ENCODE measurements at regions of chr2 and their contacts with region 1.

Region 1: GRCh38 chr2:33275689-33276444 is 200.6 kb upstream of the RASGRP3 start:
- DNase-seq: peak; percentile 99
- ATAC-seq: peak; percentile 99
- H3K4me3 ChIP-seq: no peak overlapping the region
- H3K27ac ChIP-seq: peak overlapping the region; percentile 99
- H3K4me1 ChIP-seq: peaks cover 37% of the 10 kb centered on the region
- H3K27me3 ChIP-seq: no peaks in the 10 kb centered on the region
- CTCF ChIP-seq: no peak

Region 2: DNA sequence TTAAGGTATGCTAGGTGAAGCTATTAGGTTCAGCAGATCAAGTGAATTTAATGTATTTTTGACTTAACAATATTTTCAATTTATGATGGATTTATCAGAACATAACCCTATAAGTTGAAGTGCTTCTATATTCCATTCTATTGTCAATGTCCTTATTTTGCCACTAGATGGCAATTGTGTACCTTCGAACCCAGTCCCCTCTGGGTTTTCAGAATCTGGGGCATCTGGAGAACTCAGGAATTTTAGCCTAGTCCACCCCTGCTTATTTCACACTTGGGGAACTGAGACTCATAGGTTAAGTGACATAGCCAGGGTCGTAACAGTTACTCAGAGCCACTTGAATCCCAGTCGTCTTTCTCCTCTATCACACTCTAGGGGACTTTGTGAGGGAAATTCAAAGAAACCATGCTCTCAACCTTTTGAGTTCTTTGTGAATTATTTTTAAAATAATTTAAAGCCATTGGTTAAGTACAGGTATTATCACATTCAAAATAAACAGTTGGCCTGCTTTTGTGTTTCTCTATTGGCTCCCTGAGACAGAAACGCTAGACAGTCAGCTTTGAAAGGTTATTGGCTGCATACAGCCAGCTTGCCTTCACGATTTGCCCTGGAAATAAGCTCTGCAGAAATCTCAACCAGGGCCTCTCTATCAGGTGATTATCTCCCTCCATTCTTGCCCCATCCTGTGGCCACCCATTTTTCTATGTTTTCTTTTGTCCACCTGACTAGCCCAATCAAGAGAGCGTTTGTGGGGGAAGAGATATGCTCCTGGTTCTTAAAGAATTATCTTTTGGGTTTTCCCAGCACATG is 503.0 kb before region 1 on chr2:
- CTCF ChIA-PET with region 1: no interaction called
- POLR2A ChIA-PET with region 1: no interaction called
- intact Hi-C with region 1: loop called (anchors 5 kb)
- DNase-seq: peak; percentile 73
- ATAC-seq: peak; percentile 75
- H3K4me3 ChIP-seq: no peak overlapping the region
- H3K27ac ChIP-seq: no peak overlapping the region
- H3K4me1 ChIP-seq: no peaks in the 10 kb centered on the region
- H3K27me3 ChIP-seq: no peaks in the 10 kb centered on the region
- CTCF ChIP-seq: peak; percentile 91

Region 3: DNA sequence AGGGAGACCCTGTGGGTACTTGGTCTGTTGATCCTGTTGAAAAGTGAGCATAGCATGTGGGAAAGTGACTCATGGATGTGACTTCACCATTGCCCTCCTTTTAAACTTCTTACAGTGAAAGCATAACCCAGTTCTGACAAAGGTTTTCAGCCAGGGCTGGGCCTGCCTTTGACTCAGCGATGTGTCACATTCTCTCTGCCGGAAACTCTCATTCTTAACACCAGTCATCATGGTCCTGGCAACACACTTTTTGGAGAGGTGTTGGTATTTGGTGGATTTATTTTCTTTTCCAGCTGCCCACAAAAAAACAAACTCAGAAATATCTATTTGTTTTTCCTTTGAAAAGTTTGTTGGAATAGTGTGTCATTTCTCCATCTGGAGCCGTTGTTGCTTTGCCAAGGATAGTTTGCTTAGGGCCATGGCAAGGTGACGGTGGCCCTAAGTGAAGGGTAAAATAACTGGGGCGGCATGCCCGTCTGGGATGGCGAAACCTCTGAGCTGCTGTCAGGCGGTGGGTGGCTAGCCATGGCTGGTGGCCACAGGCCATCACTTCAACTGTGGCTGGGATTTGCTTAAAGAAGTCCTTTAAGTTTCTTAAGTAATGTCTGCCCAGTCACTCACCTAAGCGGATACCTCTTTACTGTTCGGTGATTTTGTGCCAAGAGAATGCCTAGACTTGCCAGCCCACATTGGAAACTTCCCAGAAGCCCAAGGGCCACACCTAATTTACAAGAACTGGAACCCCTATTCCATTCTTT is 205.8 kb before region 1 on chr2:
- CTCF ChIA-PET with region 1: no interaction called
- POLR2A ChIA-PET with region 1: no interaction called
- intact Hi-C with region 1: loop called (anchors 1 kb)
- DNase-seq: peak; percentile 99
- ATAC-seq: peak; percentile 86
- H3K4me3 ChIP-seq: peak overlapping the region; percentile 19; the same call in 1 of the 2 replicates
- H3K27ac ChIP-seq: peak overlapping the region; percentile 98
- H3K4me1 ChIP-seq: peaks cover 62% of the 10 kb centered on the region
- H3K27me3 ChIP-seq: no peaks in the 10 kb centered on the region
- CTCF ChIP-seq: no peak

Region 4: DNA sequence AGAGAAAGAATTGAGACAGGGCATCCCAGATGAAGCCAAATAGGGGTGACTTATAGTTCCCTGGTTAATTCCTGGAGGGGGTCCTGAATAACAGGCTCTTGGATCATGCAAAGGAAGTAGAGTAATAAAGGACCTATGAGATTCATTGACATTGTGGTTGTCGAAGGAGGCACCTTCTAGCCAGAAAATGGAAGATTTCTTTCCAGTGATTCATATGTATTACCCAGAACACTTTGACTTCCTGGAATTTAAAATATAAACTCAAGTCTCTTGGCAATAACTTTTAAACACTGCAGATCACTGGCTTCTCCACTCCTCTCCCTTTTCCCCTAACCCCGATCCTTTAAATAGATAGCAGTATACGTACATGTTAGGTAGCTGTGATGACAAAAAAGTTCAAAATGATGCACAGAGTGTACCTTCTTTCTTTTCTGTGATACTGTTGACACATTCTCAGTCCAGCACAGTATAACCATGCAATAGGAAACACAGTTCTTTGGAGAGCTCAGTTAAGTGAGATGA is 117.3 kb before region 1 on chr2:
- CTCF ChIA-PET with region 1: no interaction called
- POLR2A ChIA-PET with region 1: no interaction called
- intact Hi-C with region 1: loop called (anchors 5 kb)
- DNase-seq: peak; percentile 90
- ATAC-seq: peak; percentile 87
- H3K4me3 ChIP-seq: peak overlapping the region; percentile 24; the same call in 1 of the 2 replicates
- H3K27ac ChIP-seq: peak overlapping the region; percentile 89
- H3K4me1 ChIP-seq: peaks cover 26% of the 10 kb centered on the region
- H3K27me3 ChIP-seq: no peaks in the 10 kb centered on the region
- CTCF ChIP-seq: no peak

Region 5: DNA sequence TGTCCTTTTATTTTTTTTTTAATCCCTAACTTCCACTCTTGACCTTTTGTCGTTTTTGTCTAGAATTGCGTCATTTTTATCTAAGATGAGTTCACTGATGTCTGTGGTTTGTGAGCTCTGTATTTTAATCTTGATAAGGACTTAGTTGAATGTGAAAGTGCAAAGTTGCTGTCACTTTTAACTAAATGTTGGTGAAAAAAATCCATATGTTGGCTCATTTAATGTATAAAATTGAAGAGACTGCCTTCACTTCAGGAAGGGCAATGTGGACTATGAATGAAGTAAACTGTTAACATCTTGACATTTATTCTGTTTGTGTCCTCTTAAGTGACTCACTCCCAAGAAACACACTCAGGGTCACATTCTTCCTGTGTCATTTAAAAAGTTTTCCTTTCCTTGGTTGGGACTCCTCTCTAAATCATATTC is 56.0 kb before region 1 on chr2:
- CTCF ChIA-PET with region 1: no interaction called
- POLR2A ChIA-PET with region 1: no interaction called
- intact Hi-C with region 1: no loop called
- DNase-seq: peak; percentile 46
- ATAC-seq: peak; percentile 75
- H3K4me3 ChIP-seq: no peak overlapping the region
- H3K27ac ChIP-seq: peak overlapping the region; percentile 19
- H3K4me1 ChIP-seq: peaks cover 13% of the 10 kb centered on the region
- H3K27me3 ChIP-seq: no peaks in the 10 kb centered on the region
- CTCF ChIP-seq: no peak

Region 6: GRCh38 chr2:33372940-33373553 is 97.2 kb after region 1 on chr2:
- CTCF ChIA-PET with region 1: no interaction called
- POLR2A ChIA-PET with region 1: no interaction called
- intact Hi-C with region 1: loop called (anchors 2 kb)
- DNase-seq: peak; percentile 86
- ATAC-seq: peak; percentile 45; the same call in 1 of the 2 replicates
- H3K4me3 ChIP-seq: no peak overlapping the region
- H3K27ac ChIP-seq: peak overlapping the region; percentile 50
- H3K4me1 ChIP-seq: peaks cover 8% of the 10 kb centered on the region; the same call in 1 of the 2 replicates
- H3K27me3 ChIP-seq: no peaks in the 10 kb centered on the region
- CTCF ChIP-seq: peak; percentile 90